ENCODE measurements at regions of chr10 and their contacts with region 1.

Region 1: GRCh38 chr10:113475381-113475807 is 77.5 kb upstream of the HABP2 start:
- DNase-seq: peak; percentile 85
- ATAC-seq: peak; percentile 76
- H3K4me3 ChIP-seq: no peak overlapping the region
- H3K27ac ChIP-seq: no peak overlapping the region
- H3K4me1 ChIP-seq: peaks cover 21% of the 10 kb centered on the region
- H3K27me3 ChIP-seq: no peaks in the 10 kb centered on the region
- CTCF ChIP-seq: peak; percentile 43

Region 2: DNA sequence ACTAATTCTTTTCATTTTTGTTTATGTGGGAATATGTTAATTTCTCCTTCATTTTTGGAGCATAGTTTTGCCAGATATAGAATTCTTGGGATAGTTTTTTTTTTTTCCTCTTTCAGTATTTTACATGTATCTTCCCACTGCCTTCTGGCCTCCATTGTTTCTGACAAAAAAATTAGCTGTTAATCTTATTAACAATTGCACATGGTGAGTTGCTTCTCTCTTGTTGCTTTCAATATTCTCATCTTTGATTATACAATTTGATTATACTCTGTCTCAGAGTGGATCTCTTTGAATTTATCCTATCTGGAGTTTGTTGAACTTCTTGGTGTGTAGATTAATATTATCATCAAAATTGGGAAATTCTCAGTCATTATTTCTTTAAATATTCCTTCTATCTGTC is 36.0 kb after region 1 on chr10:
- CTCF ChIA-PET with region 1: no interaction called
- POLR2A ChIA-PET with region 1: no interaction called
- intact Hi-C with region 1: loop called (anchors 5 kb)
- DNase-seq: no peak
- ATAC-seq: no peak
- H3K4me3 ChIP-seq: no peak overlapping the region
- H3K27ac ChIP-seq: no peak overlapping the region
- H3K4me1 ChIP-seq: no peaks in the 10 kb centered on the region
- H3K27me3 ChIP-seq: no peaks in the 10 kb centered on the region
- CTCF ChIP-seq: no peak